ENCODE measurements at regions of chr14 and their contacts with region 1.

Region 1: GRCh38 chr14:49585803-49586672 is at the start of gene RPS29:
- DNase-seq: peak; percentile 97
- H3K4me3 Mint-ChIP-seq: peak within 1 kb of the TSS; percentile 93
- H3K27ac Mint-ChIP-seq: peak within 1 kb of the TSS; percentile 99
- H3K4me1 Mint-ChIP-seq: peaks cover 46% of the 10 kb centered on the region
- H3K27me3 Mint-ChIP-seq: peaks cover 3% of the 10 kb centered on the region
- total RNA-seq, gene RPS29: 1,860 and 1,913 TPM in 2 replicates

Region 2: GRCh38 chr14:49550286-49551184 is 35.5 kb before region 1 on chr14:
- intact Hi-C with region 1: no loop called
- DNase-seq: no peak
- H3K4me3 Mint-ChIP-seq: no peak overlapping the region
- H3K27ac Mint-ChIP-seq: no peak overlapping the region
- H3K4me1 Mint-ChIP-seq: no peaks in the 10 kb centered on the region
- H3K27me3 Mint-ChIP-seq: peaks cover 6% of the 10 kb centered on the region

Region 3: DNA sequence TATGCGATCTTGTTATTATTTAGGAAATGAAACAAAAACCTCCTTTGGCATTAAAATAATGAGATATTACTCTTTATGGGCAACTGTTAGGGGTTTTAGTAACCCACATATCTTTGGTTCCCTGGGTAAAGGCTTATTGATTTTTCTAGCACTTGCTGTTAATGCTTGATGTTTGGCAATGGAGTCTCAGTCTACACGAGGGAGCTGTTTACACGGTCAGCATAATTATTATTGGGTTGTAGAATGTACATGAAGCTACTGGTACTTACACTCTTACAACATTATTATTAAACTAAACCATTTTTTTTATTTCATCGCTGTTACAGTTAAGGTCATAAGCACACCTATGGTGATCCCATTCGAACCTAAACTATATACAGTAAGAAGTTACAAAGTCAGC is 12.0 kb before region 1 on chr14:
- intact Hi-C with region 1: no loop called
- DNase-seq: no peak
- H3K4me3 Mint-ChIP-seq: no peak overlapping the region
- H3K27ac Mint-ChIP-seq: no peak overlapping the region
- H3K4me1 Mint-ChIP-seq: peaks cover 4% of the 10 kb centered on the region
- H3K27me3 Mint-ChIP-seq: no peaks in the 10 kb centered on the region

Region 4: GRCh38 chr14:49598485-49599300 is 12.7 kb after region 1 on chr14 and contains the start of gene LRR1:
- intact Hi-C with region 1: loop called (anchors 1 kb)
- DNase-seq: peak; percentile 82
- H3K4me3 Mint-ChIP-seq: peak within 1 kb of the TSS; percentile 92
- H3K27ac Mint-ChIP-seq: peak within 1 kb of the TSS; percentile 95
- H3K4me1 Mint-ChIP-seq: peaks cover 44% of the 10 kb centered on the region
- H3K27me3 Mint-ChIP-seq: no peaks in the 10 kb centered on the region
- total RNA-seq, gene LRR1: 45.1 and 46.7 TPM in 2 replicates

Region 5: DNA sequence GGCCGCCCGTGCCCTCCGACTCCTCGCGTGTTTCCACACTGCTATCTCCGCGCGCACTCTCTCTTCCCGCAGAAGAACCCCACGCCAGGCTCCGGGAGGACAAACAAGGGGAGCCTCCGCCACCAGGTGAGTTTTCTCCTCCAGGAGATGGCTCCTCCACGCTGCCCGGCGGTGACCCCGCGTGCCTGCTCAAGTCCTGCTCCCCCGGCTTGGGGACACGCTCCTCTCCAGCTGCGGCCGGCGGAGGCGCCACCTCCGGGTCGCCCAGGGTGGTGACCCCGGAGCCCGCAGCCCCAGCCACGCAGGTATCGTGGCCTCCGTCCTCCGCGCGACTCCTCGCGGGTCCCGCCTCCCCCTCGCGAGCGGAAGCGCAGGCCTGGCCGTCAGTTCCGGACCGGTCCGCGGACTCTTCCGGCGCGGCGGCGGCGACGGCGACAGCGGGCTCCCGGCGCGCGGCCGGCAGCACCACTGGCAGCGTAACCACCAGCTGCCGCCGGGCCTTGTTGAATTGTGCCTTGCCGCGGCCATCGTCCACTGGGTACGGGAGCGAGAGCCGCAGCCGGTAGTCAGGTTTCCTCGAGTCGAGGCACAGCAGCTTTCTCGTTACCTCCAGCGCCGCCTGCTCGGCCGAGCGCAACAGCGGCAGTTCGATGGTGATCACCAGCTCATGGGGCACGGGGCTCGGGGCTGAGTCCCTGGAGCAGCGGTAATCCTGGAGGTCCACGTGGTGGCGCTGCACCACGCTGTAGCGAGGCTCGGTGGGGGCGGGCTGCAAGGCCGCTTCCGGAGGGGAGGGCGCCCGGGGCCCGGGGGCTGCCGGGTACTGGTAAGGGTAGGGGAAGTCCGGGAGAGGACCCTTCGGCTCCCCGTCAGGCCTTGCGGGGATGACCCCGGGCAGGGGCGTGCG is 47.9 kb after region 1 on chr14:
- intact Hi-C with region 1: loop called (anchors 1 kb)
- DNase-seq: peak; percentile 93
- H3K4me3 Mint-ChIP-seq: peak overlapping the region; percentile 93
- H3K27ac Mint-ChIP-seq: peak overlapping the region; percentile 96
- H3K4me1 Mint-ChIP-seq: peaks cover 39% of the 10 kb centered on the region
- H3K27me3 Mint-ChIP-seq: no peaks in the 10 kb centered on the region

Region 6: DNA sequence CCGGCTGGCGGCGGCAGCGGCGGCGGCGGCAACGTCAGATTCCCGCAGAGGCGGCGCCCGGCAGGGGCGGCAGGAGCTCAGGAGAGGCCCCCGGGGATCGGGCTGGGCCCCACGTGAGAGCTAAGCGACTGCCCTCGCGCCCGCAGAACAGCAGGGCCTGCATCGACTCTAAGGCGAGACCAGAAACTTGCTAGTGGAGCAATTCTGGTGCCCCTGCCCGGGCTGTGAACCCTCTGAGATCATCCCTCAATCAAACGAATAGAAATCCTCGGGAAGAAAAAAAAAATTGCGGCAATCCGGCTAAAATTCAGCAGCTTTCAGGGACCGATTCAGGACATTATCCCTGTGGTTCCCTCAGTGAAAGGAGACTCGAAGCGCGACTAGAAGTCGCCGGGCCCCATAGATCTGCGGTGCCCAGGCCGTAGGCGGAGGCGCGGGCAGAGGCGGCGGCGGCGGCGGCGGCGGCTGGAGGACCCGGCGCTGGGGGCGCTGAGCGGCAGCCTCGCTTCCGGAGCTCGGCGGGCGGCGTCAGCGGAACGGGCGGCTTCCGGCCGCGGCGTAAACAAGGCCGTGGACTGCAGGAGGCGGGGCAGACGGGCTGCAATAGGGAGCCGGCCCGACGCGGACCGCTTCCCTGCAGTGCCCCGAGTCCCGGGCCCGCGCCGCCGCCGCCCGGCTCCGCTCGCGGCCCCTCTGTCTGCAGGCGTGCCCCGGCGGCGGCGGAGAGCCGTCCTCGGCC is 181.7 kb after region 1 on chr14 and contains the start of gene KLHDC2:
- intact Hi-C with region 1: loop called (anchors 1 kb)
- DNase-seq: peak; percentile 89
- H3K4me3 Mint-ChIP-seq: peak within 1 kb of the TSS; percentile 99
- H3K27ac Mint-ChIP-seq: peak within 1 kb of the TSS; percentile 100
- H3K4me1 Mint-ChIP-seq: peaks cover 33% of the 10 kb centered on the region
- H3K27me3 Mint-ChIP-seq: peaks cover 2% of the 10 kb centered on the region
- total RNA-seq, gene KLHDC2: 23.7 and 26.2 TPM in 2 replicates

Region 7: DNA sequence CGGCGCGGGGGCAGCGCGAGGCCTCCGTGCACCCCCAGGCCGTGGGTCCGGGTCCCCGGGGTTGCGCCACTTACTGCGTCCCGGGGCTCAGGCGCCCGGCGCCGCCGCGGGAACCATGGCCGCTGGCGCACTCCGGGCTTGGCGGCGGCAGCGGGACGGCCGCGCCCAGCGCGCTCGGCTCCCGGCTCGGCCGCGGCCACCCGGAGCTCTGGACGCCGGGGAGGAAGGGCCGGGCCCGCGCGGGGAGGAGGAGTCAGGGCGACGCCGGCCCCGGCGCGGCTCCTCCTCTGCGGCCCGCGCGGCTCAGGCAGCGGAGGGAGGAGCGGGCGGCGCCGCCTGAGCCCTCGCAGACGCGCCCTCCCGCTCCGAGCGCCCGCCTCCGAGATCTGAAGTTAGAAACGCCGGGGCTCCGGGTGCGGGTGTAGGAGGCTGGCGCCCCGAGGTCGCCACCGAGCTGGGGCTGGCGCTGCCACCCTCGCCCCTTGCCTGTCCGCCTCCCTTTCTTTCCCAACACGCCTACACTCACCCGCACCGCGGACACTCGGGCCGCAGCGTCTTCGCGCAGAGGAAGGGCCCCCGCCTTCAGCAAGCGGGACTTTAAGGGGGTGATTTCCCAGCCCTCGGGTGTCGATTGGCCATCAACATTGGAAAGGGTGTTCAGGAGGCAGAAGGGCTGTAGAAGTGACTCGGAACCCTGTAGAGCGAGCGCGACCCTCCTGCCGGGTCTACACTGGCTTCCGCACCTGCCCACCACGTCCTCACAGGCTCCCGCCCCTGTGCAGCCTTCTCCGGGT is 1245.1 kb after region 1 on chr14 and contains the start of gene NIN:
- intact Hi-C with region 1: loop called (anchors 10 kb)
- DNase-seq: peak; percentile 73
- H3K4me3 Mint-ChIP-seq: peak within 1 kb of the TSS; percentile 93
- H3K27ac Mint-ChIP-seq: peak within 1 kb of the TSS; percentile 95
- H3K4me1 Mint-ChIP-seq: peaks cover 67% of the 10 kb centered on the region
- H3K27me3 Mint-ChIP-seq: peaks cover 16% of the 10 kb centered on the region
- total RNA-seq, gene NIN: 39.9 and 43.3 TPM in 2 replicates

Measured in activated T-helper 1 cell treated with anti-CD3 and anti-CD28 coated beads, Interleukin-12 subunit alpha, Interleukin-12 subunit beta, Interleukin-2, Interleukin-4 antibody, amounts not matched to agents 30 ng/mL and 10 ng/mL and 1 ng/mL, durations not matched to agents 14 hours and 24 hours and 36 hours (primary cell).